GM23248 (cell line): ENCODE measurements at regions of chr12 and their contacts with region 1.

Region 1: GRCh38 chr12:17866802-17867201 is 223.2 kb downstream of the RERGL start:
- DNase-seq: no peak
- H3K4me3 ChIP-seq: no peak overlapping the region
- H3K27ac ChIP-seq: no peak overlapping the region
- H3K4me1 ChIP-seq: no peaks in the 10 kb centered on the region
- H3K27me3 ChIP-seq: no peaks in the 10 kb centered on the region

Region 2: GRCh38 chr12:17778242-17778641 is 88.6 kb before region 1 on chr12:
- in situ Hi-C with region 1: loop called (anchors 5 kb)
- DNase-seq: no peak
- H3K4me3 ChIP-seq: no peak overlapping the region
- H3K27ac ChIP-seq: no peak overlapping the region
- H3K4me1 ChIP-seq: no peaks in the 10 kb centered on the region
- H3K27me3 ChIP-seq: no peaks in the 10 kb centered on the region